GM12878 (cell line): ENCODE measurements at regions of chr11 and their contacts with region 1.

Region 1: GRCh38 chr11:96342961-96343711 is at the start of gene MAML2:
- DNase-seq: peak; percentile 91
- ATAC-seq: peak; percentile 81
- H3K4me3 ChIP-seq: peak within 1 kb of the TSS; percentile 100
- H3K27ac ChIP-seq: peak within 1 kb of the TSS; percentile 80
- H3K4me1 ChIP-seq: peaks cover 12% of the 10 kb centered on the region
- H3K27me3 ChIP-seq: no peaks in the 10 kb centered on the region
- CTCF ChIP-seq: peak; percentile 93 to 98 (median 96)
- EP300 ChIP-seq: no peak; a peak in 1 of 4 replicates
- POLR2A ChIP-seq: no peak; the same call in 1 of the 2 replicates
- RAD21 ChIP-seq: peak; percentile 90
- polyA plus RNA-seq, gene MAML2: 2.5 to 2.6 TPM

Region 2: DNA sequence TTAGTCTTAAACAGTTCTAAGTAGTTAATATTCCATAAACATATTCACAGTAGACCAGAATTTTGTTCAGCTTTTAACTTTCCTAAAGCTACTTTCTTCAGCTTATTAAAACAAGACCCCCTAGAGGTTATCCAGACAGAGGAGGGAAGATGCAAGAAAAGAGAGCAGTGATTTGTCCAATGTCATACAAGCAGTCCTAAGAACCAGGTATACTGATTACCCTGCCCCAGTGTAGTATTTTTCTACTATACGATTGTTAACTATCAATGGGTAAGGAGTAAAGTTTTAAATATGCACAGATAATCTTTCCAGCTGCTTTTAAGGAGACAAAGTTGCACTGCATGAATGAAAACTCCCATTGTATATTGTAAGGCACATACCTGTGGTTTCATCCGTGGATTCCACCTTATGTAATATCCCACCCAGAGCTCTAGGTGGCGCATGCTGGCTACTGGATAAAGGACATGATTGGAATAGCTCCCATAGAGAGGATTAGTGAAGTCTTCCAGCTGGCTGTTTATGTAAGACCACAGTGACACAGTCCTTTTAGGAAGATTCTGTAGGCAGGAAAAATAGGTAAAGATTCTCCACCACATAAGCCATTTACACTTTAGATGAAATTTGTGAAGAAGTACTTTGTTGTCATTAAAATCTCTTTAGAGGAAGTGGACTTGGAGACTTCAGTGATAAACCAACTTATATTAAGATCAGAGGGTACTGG is 507.2 kb before region 1 on chr11:
- CTCF ChIA-PET with region 1: interaction called, 62 read pairs
- POLR2A ChIA-PET with region 1: interaction called, 3 read pairs
- RAD21 ChIA-PET with region 1: interaction called, 32 read pairs
- SMC1A ChIA-PET with region 1: interaction called, 34 read pairs
- in situ Hi-C with region 1: no loop called
- intact Hi-C with region 1: no loop called
- DNase-seq: peak; percentile 13
- ATAC-seq: peak; percentile 97
- H3K4me3 ChIP-seq: no peak overlapping the region
- H3K27ac ChIP-seq: no peak overlapping the region
- H3K4me1 ChIP-seq: no peaks in the 10 kb centered on the region
- H3K27me3 ChIP-seq: no peaks in the 10 kb centered on the region
- CTCF ChIP-seq: peak; percentile 86 to 94 (median 88)
- EP300 ChIP-seq: no peak
- POLR2A ChIP-seq: no peak
- RAD21 ChIP-seq: peak; percentile 96

Region 3: GRCh38 chr11:96054870-96055705 is 288.0 kb before region 1 on chr11:
- CTCF ChIA-PET with region 1: interaction called, 256 read pairs
- POLR2A ChIA-PET with region 1: interaction called, 9 read pairs
- RAD21 ChIA-PET with region 1: interaction called, 213 read pairs
- SMC1A ChIA-PET with region 1: interaction called, 184 read pairs
- in situ Hi-C with region 1: loop called (anchors 5 kb)
- intact Hi-C with region 1: loop called (anchors 2 kb)
- DNase-seq: no peak
- ATAC-seq: no peak
- H3K4me3 ChIP-seq: no peak overlapping the region
- H3K27ac ChIP-seq: no peak overlapping the region
- H3K4me1 ChIP-seq: peaks cover 27% of the 10 kb centered on the region
- H3K27me3 ChIP-seq: no peaks in the 10 kb centered on the region
- CTCF ChIP-seq: peak; percentile 46 to 58 (median 48)
- EP300 ChIP-seq: no peak
- POLR2A ChIP-seq: no peak
- RAD21 ChIP-seq: peak; percentile 63

Region 4: DNA sequence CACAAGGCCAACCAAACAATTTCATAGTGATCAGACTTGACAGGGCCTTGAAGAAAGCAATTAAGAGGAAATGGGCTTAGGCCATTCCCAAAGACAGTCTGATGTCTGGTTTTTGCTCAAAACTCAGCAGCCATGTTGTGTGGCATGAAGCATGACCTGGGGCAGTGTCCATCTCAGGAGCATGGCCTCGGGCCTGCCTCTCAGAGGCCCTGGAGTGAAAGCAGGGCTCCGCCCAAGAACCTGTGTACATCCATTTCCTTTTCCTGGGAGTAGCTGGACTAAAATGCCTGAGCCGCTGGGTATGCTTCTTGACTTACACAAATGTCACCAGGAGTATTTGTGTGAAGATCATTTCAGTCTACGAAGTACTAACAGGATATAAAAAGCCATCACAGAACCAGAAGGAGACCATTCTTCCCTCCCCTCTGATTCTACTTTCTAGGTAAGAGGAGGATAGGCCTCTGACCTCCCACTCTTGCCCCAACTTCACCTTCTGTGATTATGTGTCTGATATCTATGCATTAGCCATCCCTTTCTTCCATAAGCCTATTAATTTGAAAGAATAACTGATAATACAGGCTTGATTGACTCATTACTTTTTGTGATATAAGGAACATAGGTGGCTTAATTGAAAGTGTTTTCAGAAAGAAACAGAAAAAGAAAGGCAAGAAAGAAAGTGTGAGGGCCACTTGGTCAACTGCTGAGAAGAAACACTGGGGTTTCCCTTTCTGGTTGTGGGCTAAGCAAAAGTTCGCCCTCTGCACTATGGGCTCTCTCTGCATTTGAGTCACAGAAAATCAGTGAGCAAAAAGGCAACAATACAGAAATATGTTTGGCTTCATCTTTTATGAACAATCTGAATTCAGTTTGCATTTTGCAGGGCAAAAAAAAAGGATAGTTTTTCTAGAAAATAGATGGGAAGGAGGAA is 230.7 kb before region 1 on chr11:
- CTCF ChIA-PET with region 1: interaction called, 10 read pairs
- POLR2A ChIA-PET with region 1: interaction called, 3 read pairs
- RAD21 ChIA-PET with region 1: interaction called, 12 read pairs
- SMC1A ChIA-PET with region 1: interaction called, 11 read pairs
- in situ Hi-C with region 1: no loop called
- intact Hi-C with region 1: loop called (anchors 2 kb)
- DNase-seq: peak; percentile 58
- ATAC-seq: peak; percentile 96
- H3K4me3 ChIP-seq: no peak overlapping the region
- H3K27ac ChIP-seq: peak overlapping the region; percentile 76
- H3K4me1 ChIP-seq: peaks cover 32% of the 10 kb centered on the region
- H3K27me3 ChIP-seq: no peaks in the 10 kb centered on the region
- CTCF ChIP-seq: no peak
- EP300 ChIP-seq: peak; percentile 48 to 51; a peak in 2 of 4 replicates
- POLR2A ChIP-seq: no peak
- RAD21 ChIP-seq: peak; percentile 17; the same call in 1 of the 2 replicates

Region 5: DNA sequence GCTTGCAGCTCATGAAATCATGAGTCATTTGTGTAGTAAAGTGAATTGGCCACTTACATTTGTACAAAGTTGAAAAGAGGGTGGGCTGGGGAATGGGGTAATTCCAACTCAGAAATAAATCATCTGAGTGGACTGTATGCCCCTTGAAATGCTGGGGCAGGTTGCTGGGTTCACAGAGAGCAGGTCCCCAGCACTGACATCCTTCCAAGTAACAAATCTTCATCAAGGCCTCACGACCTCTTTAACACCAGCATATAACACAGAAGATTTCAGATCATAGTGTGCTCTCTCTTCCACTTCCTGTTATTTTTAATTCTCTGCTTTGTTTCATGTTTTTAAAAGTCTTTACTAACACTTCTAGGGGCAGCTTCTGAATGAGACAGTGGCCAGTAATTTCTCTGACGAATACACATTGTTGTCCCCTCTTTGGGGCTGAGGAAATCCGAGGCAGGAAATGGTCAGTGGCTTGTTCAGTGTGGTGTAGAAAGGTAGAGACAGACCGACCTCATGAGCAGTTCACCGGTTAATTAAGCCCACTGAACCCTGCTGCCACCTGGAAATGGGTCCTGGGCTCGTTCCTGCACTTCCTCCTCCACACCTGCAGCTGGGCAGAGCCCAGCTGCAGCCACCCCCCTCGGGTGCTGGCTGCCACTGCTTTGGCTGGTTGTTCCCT is 127.9 kb before region 1 on chr11:
- CTCF ChIA-PET with region 1: interaction called, 17 read pairs
- POLR2A ChIA-PET with region 1: no interaction called
- RAD21 ChIA-PET with region 1: interaction called, 21 read pairs
- SMC1A ChIA-PET with region 1: interaction called, 12 read pairs
- in situ Hi-C with region 1: no loop called
- intact Hi-C with region 1: no loop called
- DNase-seq: peak; percentile 72
- ATAC-seq: peak; percentile 91
- H3K4me3 ChIP-seq: peak overlapping the region; percentile 18; the same call in 1 of the 2 replicates
- H3K27ac ChIP-seq: peak overlapping the region; percentile 77
- H3K4me1 ChIP-seq: peaks cover 38% of the 10 kb centered on the region
- H3K27me3 ChIP-seq: no peaks in the 10 kb centered on the region
- CTCF ChIP-seq: no peak
- EP300 ChIP-seq: peak in 1 of 2 experiments; percentile 40; a peak in 1 of 4 replicates
- POLR2A ChIP-seq: no peak
- RAD21 ChIP-seq: no peak

Region 6: GRCh38 chr11:96279018-96279895 is 63.9 kb before region 1 on chr11:
- CTCF ChIA-PET with region 1: interaction called, 39 read pairs
- POLR2A ChIA-PET with region 1: interaction called, 4 read pairs
- RAD21 ChIA-PET with region 1: interaction called, 44 read pairs
- SMC1A ChIA-PET with region 1: interaction called, 76 read pairs
- in situ Hi-C with region 1: no loop called
- intact Hi-C with region 1: no loop called
- DNase-seq: no peak
- ATAC-seq: peak; percentile 71
- H3K4me3 ChIP-seq: no peak overlapping the region
- H3K27ac ChIP-seq: peak overlapping the region; percentile 42; the same call in 1 of the 2 replicates
- H3K4me1 ChIP-seq: peaks cover 37% of the 10 kb centered on the region
- H3K27me3 ChIP-seq: no peaks in the 10 kb centered on the region
- CTCF ChIP-seq: no peak
- EP300 ChIP-seq: no peak
- POLR2A ChIP-seq: no peak
- RAD21 ChIP-seq: no peak

Region 7: DNA sequence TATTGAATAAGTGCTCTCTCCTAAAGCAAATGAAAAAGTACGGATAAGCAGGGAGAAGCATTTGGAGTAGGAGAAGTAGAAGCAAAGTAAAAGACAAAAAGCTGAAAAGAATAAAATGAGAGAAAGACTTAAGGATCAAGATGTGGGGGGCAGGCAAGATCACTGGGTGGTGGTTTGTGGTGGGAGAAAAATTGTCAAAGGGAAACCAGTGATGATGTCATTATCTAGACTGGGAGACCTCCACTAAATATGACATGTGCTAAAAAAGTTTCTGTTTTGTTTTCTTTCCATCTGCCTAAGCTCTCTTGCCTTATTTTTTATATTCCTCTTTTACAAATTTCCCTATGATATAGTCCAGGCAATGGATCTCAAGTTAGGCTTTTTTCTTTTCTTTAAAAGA is 14.7 kb after region 1 on chr11:
- CTCF ChIA-PET with region 1: interaction called, 12 read pairs
- POLR2A ChIA-PET with region 1: no interaction called
- RAD21 ChIA-PET with region 1: interaction called, 7 read pairs
- SMC1A ChIA-PET with region 1: interaction called, 5 read pairs
- in situ Hi-C with region 1: no loop called
- intact Hi-C with region 1: no loop called
- DNase-seq: no peak
- ATAC-seq: peak; percentile 80
- H3K4me3 ChIP-seq: no peak overlapping the region
- H3K27ac ChIP-seq: no peak overlapping the region; the same call in 1 of the 2 replicates
- H3K4me1 ChIP-seq: no peaks in the 10 kb centered on the region
- H3K27me3 ChIP-seq: no peaks in the 10 kb centered on the region
- CTCF ChIP-seq: no peak
- EP300 ChIP-seq: no peak
- POLR2A ChIP-seq: no peak
- RAD21 ChIP-seq: no peak

Region 8: GRCh38 chr11:96648991-96649390 is 305.9 kb after region 1 on chr11:
- CTCF ChIA-PET with region 1: no interaction called
- POLR2A ChIA-PET with region 1: no interaction called
- RAD21 ChIA-PET with region 1: no interaction called
- SMC1A ChIA-PET with region 1: no interaction called
- in situ Hi-C with region 1: no loop called
- intact Hi-C with region 1: no loop called
- DNase-seq: no peak
- ATAC-seq: no peak
- H3K4me3 ChIP-seq: no peak overlapping the region
- H3K27ac ChIP-seq: no peak overlapping the region
- H3K4me1 ChIP-seq: no peaks in the 10 kb centered on the region
- H3K27me3 ChIP-seq: no peaks in the 10 kb centered on the region
- CTCF ChIP-seq: no peak
- EP300 ChIP-seq: no peak
- POLR2A ChIP-seq: no peak
- RAD21 ChIP-seq: no peak